ENCODE measurements at regions of chr5 and their contacts with region 1.

Region 1: DNA sequence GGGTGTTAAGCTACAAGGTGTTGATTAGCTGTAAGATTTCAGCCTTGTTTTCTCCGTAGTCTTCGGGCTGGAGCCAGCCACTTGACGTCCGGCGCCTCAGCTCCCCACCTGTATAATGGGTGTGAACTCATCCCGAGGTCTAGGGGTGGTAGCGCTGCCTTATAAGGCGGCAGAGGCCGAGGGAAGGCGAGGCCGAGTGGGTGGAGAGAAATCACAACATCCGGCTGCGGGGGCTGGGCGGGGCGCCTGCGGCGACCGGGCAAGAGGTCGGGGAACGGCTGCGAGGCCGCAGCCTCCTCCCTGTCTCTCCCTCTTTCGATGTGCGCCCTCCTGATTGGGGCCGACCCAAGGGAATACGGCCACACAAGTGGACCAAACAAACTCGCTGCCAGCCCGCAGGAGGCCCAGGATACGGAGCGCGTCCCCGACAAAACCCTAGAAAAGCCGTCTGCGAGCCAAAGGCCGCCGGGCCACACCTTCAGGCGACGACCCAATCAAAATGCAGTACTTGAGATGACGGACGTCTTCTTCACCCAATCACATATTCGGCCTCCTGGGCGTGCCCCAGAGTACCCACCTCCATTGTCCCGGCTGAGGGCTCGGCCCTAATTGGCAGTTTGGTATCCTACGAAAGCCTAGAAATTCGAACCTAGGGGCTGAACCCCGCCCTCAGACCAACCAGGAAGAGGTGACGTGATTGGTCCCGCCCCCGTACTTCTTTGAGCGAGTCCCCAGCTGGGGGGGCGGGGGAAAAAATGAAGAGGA is 493 bp upstream of the GRK6 start:
- DNase-seq: peak; percentile 98 to 100 (median 100)
- ATAC-seq: peak; percentile 79
- H3K4me3 ChIP-seq: peak overlapping the region; percentile 52
- H3K4me3 Mint-ChIP-seq: peak overlapping the region; percentile 97
- H3K27ac ChIP-seq: peak overlapping the region; percentile 77 to 83
- H3K27ac Mint-ChIP-seq: peak overlapping the region; percentile 96
- H3K4me1 ChIP-seq: peaks cover 63% of the 10 kb centered on the region
- H3K4me1 Mint-ChIP-seq: peaks cover 42% of the 10 kb centered on the region
- H3K27me3 ChIP-seq: no peaks in the 10 kb centered on the region
- H3K27me3 Mint-ChIP-seq: no peaks in the 10 kb centered on the region
- CTCF ChIP-seq: no peak

Region 2: GRCh38 chr5:177133091-177133852 is 292.7 kb before region 1 on chr5 and contains the start of gene NSD1:
- CTCF ChIA-PET with region 1: no interaction called
- POLR2A ChIA-PET with region 1: interaction called, 11 read pairs
- intact Hi-C with region 1: no loop called
- DNase-seq: peak; percentile 83 to 97 (median 90)
- ATAC-seq: peak; percentile 71
- H3K4me3 ChIP-seq: peak within 1 kb of the TSS; percentile 65
- H3K4me3 Mint-ChIP-seq: peak within 1 kb of the TSS; percentile 90
- H3K27ac ChIP-seq: peak within 1 kb of the TSS; percentile 71 to 76
- H3K27ac Mint-ChIP-seq: peak within 1 kb of the TSS; percentile 97
- H3K4me1 ChIP-seq: peaks cover 54% of the 10 kb centered on the region
- H3K4me1 Mint-ChIP-seq: peaks cover 67% of the 10 kb centered on the region
- H3K27me3 ChIP-seq: no peaks in the 10 kb centered on the region
- H3K27me3 Mint-ChIP-seq: no peaks in the 10 kb centered on the region
- CTCF ChIP-seq: no peak
- total RNA-seq, gene NSD1: 87.6 to 93.3 TPM

Region 3: GRCh38 chr5:177412603-177413233 is 13.3 kb before region 1 on chr5:
- CTCF ChIA-PET with region 1: interaction called, 4 read pairs
- POLR2A ChIA-PET with region 1: interaction called, 250 read pairs
- intact Hi-C with region 1: loop called in 1 of 2 experiments (anchors 1 kb)
- DNase-seq: peak in 3 of 14 experiments; percentile 73 to 85 (median 74)
- ATAC-seq: peak; percentile 61
- H3K4me3 ChIP-seq: peak overlapping the region; percentile 28
- H3K4me3 Mint-ChIP-seq: peak overlapping the region; percentile 48
- H3K27ac ChIP-seq: no peak overlapping the region
- H3K27ac Mint-ChIP-seq: peak overlapping the region; percentile 64
- H3K4me1 ChIP-seq: peaks cover 51% of the 10 kb centered on the region
- H3K4me1 Mint-ChIP-seq: peaks cover 45% of the 10 kb centered on the region
- H3K27me3 ChIP-seq: no peaks in the 10 kb centered on the region
- H3K27me3 Mint-ChIP-seq: no peaks in the 10 kb centered on the region
- CTCF ChIP-seq: no peak

Region 4: DNA sequence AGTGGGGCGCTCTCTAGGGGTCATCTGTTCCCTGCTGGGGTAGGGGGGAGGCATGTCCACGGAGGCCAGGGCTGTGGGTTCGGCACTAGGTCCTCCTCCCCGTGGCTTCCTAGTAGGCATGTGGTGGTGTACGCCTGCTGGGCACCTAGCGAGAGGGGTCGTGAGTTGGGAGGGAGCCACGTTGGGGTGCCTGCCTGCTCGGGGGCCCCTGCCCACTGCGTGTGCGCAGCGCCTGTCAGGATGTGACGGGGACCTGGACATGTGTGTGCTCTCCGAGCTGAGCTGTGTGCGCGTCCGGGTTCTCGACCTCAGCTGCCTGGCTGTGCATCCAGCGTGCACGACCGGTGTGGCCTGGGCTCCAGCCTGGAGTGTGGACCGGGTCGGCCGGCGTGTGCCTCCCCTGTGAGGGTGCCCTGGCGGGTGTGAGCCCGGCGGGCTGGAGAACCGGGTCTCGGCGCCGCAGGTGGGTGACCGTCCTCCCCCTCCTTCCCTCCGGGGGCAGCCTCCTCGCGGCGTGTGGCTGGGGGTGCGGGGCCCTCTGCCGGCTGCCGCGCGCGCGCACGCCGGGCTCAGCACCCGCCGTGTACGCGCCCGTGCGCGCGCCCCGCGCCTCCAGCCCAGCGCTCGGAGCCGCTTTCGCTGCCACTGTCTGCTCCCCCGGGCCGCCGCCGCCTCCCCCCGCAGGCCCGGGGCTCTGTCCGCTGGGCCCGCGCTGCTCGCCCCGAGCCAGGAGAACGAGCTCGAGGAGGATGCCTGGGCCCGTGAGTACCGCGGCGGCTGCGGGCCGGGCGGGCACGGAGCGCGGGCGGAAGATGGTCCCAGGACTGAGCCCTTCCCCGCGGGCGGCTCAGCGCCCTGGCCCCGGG is 20.4 kb after region 1 on chr5 and contains the start of gene PRR7:
- CTCF ChIA-PET with region 1: interaction called, 6 read pairs
- POLR2A ChIA-PET with region 1: interaction called, 661 read pairs
- intact Hi-C with region 1: loop called (anchors 1 to 2 kb)
- DNase-seq: peak; percentile 56 to 93 (median 72)
- ATAC-seq: peak; percentile 43
- H3K4me3 ChIP-seq: peak within 1 kb of the TSS; percentile 56
- H3K4me3 Mint-ChIP-seq: peak within 1 kb of the TSS; percentile 80
- H3K27ac ChIP-seq: peak within 1 kb of the TSS; percentile 73 to 89
- H3K27ac Mint-ChIP-seq: peak within 1 kb of the TSS; percentile 88
- H3K4me1 ChIP-seq: peaks cover 73% of the 10 kb centered on the region
- H3K4me1 Mint-ChIP-seq: peaks cover 56% of the 10 kb centered on the region
- H3K27me3 ChIP-seq: no peaks in the 10 kb centered on the region
- H3K27me3 Mint-ChIP-seq: no peaks in the 10 kb centered on the region
- CTCF ChIP-seq: no peak
- total RNA-seq, gene PRR7: 23.3 to 23.5 TPM

Region 5: GRCh38 chr5:177454397-177455035 is 28.5 kb after region 1 on chr5:
- CTCF ChIA-PET with region 1: interaction called, 82 read pairs
- POLR2A ChIA-PET with region 1: interaction called, 661 read pairs
- intact Hi-C with region 1: loop called (anchors 1 kb)
- DNase-seq: peak; percentile 87 to 97 (median 94)
- ATAC-seq: peak; percentile 45
- H3K4me3 ChIP-seq: peak overlapping the region; percentile 71
- H3K4me3 Mint-ChIP-seq: peak overlapping the region; percentile 89
- H3K27ac ChIP-seq: peak overlapping the region; percentile 90 to 95
- H3K27ac Mint-ChIP-seq: peak overlapping the region; percentile 93
- H3K4me1 ChIP-seq: peaks cover 52% of the 10 kb centered on the region
- H3K4me1 Mint-ChIP-seq: peaks cover 43% of the 10 kb centered on the region
- H3K27me3 ChIP-seq: no peaks in the 10 kb centered on the region
- H3K27me3 Mint-ChIP-seq: no peaks in the 10 kb centered on the region
- CTCF ChIP-seq: peak; percentile 79